ENCODE measurements at regions of chr12 and their contacts with region 1.

Region 1: GRCh38 chr12:11986165-11986564 is 84.6 kb upstream of the BCL2L14 start:
- DNase-seq: no peak
- H3K4me3 ChIP-seq: no peak overlapping the region
- H3K27ac ChIP-seq: no peak overlapping the region
- H3K4me1 ChIP-seq: peaks cover 3 to 11% (median 9%) of the 10 kb centered on the region in 4 experiments
- H3K27me3 ChIP-seq: no peaks in the 10 kb centered on the region

Region 2: DNA sequence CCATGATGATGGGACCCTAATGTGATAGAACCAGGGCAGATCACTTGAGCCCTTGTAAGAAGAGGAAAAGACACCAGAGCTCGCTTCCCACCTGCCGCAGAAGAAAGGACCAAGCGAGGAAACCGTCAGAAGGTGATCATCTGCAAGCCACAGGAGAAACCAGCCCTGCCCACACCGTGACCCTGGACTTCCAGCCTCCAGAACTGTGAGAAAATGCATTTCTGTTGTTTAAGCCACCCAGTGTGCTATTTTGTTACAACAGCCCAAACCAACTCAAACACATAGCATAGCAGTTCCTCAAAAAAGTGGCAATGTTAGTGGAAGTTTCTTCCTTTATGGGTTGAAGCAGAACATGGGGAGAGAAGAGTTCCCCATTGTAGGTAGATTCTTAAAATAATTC is 23.3 kb before region 1 on chr12:
- CTCF ChIA-PET with region 1: interaction called, 10 read pairs
- POLR2A ChIA-PET with region 1: no interaction called
- DNase-seq: peak in 2 of 3 donors; percentile 43 to 45
- H3K4me3 ChIP-seq: no peak overlapping the region
- H3K27ac ChIP-seq: no peak overlapping the region
- H3K4me1 ChIP-seq: peaks cover 0 to 34% (median 23%) of the 10 kb centered on the region in 4 experiments
- H3K27me3 ChIP-seq: no peaks in the 10 kb centered on the region

Region 3: DNA sequence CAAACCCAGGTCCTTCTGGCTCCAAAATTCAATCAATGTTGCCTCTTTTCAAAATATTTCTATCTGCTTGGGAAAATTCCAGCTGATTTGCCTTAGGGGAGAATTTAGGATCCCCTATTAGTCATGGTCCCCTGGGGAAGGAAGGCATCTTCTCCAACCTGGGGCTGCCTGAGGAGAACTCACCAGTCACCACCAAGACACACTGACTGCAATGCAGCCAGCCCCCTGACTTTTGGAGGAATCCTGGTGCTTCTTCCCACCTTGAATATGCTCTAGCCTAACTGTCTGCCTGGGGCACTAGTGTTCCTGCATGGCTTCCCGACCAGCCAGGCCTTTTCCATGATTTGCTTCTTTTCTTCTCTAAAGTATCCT is 12.8 kb after region 1 on chr12:
- CTCF ChIA-PET with region 1: no interaction called
- POLR2A ChIA-PET with region 1: no interaction called
- DNase-seq: no peak
- H3K4me3 ChIP-seq: no peak overlapping the region
- H3K27ac ChIP-seq: no peak overlapping the region
- H3K4me1 ChIP-seq: no peaks in the 10 kb centered on the region
- H3K27me3 ChIP-seq: no peaks in the 10 kb centered on the region

Region 4: DNA sequence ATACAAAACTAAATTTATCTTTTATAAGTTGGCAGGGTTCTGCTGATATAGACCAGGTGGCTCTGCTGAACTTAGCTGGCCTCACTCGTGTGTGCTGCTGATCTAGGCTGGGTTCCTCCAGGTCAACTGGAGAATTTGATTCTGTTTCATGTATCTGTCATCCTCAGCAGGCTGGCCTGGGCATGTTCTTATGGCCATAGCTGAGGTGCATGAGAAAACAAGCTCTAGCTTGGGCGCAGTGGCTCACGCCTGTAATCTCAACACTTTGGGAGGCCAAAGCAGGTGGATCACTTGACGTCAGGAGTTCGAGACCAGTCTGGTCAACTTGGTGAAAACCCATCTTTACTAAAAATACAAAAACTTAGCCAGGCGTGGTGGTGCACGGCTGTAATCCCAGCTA is 60.2 kb after region 1 on chr12:
- CTCF ChIA-PET with region 1: no interaction called
- POLR2A ChIA-PET with region 1: no interaction called
- DNase-seq: no peak
- H3K4me3 ChIP-seq: no peak overlapping the region
- H3K27ac ChIP-seq: no peak overlapping the region
- H3K4me1 ChIP-seq: no peaks in the 10 kb centered on the region
- H3K27me3 ChIP-seq: no peaks in the 10 kb centered on the region

Region 5: DNA sequence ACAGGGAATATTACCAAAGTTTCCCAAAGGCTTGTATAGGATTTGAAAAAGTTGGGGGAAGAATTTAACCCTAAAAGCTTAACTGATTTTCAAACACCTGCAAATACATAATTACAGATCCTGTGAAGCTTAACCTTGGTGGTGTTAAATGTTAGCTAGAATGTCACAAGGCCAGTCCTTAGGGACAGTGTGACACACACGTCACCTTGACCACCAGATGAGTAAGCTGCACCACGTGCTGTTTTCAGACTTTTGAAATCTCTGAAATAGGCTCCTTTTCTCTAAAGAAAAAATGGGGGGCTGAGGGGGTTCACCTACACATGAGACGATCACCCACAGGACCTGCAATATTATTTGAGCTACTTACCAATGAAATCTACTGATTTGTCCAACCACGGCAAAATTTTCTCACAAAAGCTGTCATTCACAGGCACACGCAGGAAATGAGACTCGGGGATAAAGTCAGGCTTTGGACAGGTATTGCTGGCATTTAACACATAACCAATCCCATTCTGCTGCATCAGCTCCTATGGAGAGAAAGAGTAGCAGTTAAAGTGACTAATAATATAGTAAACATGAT is 500.6 kb after region 1 on chr12:
- CTCF ChIA-PET with region 1: no interaction called
- POLR2A ChIA-PET with region 1: no interaction called
- DNase-seq: no peak
- H3K4me3 ChIP-seq: no peak overlapping the region
- H3K27ac ChIP-seq: no peak overlapping the region
- H3K4me1 ChIP-seq: peaks cover 9 to 18% (median 14%) of the 10 kb centered on the region in 4 experiments
- H3K27me3 ChIP-seq: no peaks in the 10 kb centered on the region

Measured in common myeloid progenitor, CD34-positive (primary cell).